MCF 10A (cell line): ENCODE measurements at regions of chr22 and their contacts with region 1.

Region 1: DNA sequence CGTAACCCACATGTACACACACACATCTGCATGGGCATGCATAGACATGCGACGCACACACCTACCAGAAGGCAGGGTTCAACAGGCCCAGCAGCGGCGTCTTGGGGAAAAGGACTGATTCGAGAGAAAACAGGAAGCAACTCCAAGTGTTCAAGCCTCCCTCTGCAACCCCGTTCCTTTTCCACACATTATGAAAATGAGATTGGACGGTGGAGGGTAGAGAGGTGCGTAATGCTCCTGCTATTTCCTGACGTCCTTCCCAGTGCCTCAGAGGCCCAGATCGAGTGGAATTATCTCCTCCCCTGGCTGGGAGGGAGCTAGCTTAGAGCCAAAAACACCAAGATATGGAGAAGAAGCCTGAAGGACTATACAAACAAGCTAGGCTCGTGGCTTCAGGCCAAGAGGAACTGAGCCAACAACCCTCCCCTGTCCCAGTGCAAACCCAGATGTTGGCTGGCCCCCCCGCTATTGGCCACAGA is 289.2 kb downstream of the MN1 start:
- DNase-seq: peak; percentile 90
- H3K4me3 Mint-ChIP-seq: peak overlapping the region; percentile 9
- H3K27ac Mint-ChIP-seq: peak overlapping the region; percentile 74
- H3K4me1 Mint-ChIP-seq: peaks cover 40% of the 10 kb centered on the region
- H3K27me3 Mint-ChIP-seq: no peaks in the 10 kb centered on the region
- CTCF ChIP-seq: no peak

Region 2: GRCh38 chr22:27420817-27421361 is 91.4 kb before region 1 on chr22:
- CTCF ChIA-PET with region 1: no interaction called
- POLR2A ChIA-PET with region 1: interaction called, 6 read pairs
- intact Hi-C with region 1: loop called (anchors 5 kb)
- DNase-seq: peak; percentile 96
- H3K4me3 Mint-ChIP-seq: peak overlapping the region; percentile 65
- H3K27ac Mint-ChIP-seq: peak overlapping the region; percentile 90
- H3K4me1 Mint-ChIP-seq: peaks cover 46% of the 10 kb centered on the region
- H3K27me3 Mint-ChIP-seq: no peaks in the 10 kb centered on the region
- CTCF ChIP-seq: no peak

Region 3: DNA sequence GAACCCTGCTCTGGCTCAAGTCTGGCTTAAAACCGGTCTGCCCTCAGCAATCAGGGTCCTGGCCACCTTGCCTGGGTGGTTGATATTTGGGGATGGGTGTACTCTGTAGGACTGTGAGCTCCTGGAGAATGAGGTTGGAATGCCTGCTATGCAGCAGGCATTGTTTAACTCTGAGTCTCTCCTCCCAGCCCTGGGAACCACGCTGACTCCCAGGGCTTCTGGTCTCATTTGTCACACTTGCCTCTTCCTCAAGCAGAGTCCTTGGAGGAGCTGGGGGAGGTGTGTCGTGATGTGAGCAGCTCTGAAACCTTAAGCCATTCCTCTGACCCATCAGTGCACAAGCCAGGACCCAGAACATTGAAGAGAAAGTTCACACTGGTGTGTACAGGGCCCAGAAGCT is 50.9 kb before region 1 on chr22:
- CTCF ChIA-PET with region 1: no interaction called
- POLR2A ChIA-PET with region 1: interaction called, 4 read pairs
- intact Hi-C with region 1: loop called (anchors 10 kb)
- DNase-seq: peak; percentile 54
- H3K4me3 Mint-ChIP-seq: no peak overlapping the region
- H3K27ac Mint-ChIP-seq: peak overlapping the region; percentile 68
- H3K4me1 Mint-ChIP-seq: peaks cover 36% of the 10 kb centered on the region
- H3K27me3 Mint-ChIP-seq: no peaks in the 10 kb centered on the region
- CTCF ChIP-seq: no peak

Region 4: GRCh38 chr22:27686534-27686933 is 174.2 kb after region 1 on chr22:
- CTCF ChIA-PET with region 1: no interaction called
- POLR2A ChIA-PET with region 1: no interaction called
- intact Hi-C with region 1: no loop called
- DNase-seq: peak; percentile 69
- H3K4me3 Mint-ChIP-seq: no peak overlapping the region
- H3K27ac Mint-ChIP-seq: no peak overlapping the region
- H3K4me1 Mint-ChIP-seq: peaks cover 9% of the 10 kb centered on the region
- H3K27me3 Mint-ChIP-seq: no peaks in the 10 kb centered on the region
- CTCF ChIP-seq: no peak